Sciatic nerve (tissue), 2 donors: ENCODE measurements at regions of chr18 and their contacts with region 1.

Region 1: DNA sequence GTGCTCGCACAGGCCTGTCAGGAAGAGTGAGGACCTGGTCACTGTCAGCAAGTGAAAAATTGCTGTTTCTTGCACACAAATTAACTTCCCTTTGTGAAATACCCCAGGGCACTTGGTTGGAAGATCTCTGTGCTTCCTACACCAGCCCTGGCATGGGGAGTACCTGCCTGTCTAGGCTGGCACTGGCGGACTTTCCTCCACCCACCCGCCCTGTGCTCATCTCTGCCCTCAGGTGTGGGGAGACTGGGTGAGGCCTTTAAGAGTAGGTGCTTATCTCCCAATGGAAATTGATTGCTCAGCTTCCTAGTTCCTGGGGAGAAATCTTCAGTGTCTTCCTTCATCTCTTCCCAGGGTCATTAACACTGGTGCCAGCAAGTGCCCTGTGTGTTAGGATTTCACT is 42.1 kb downstream of the IMPA2 start:
- DNase-seq: no peak
- ATAC-seq: no peak

Region 2: DNA sequence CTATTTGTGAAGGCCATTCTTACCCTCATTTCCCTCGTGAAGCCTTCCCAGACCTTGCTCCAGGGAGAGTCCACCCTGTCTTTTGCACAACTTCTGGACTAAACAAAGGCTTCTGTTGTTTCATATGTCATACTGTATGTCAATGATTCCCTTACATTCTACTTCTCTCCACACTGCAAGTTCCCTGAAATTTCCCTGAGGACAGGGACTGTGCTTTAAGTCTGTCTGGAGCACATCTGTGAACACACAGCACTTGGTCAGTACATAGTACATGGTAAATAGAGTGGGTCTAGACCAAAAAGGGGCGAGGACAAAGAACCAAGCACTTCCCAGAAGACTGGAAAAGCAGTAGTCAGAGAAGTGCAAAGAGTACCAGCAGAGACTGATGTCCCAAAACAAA is 65.8 kb before region 1 on chr18:
- intact Hi-C with region 1: loop called (anchors 2 kb)
- DNase-seq: no peak
- ATAC-seq: peak; percentile 35